CD4-positive, alpha-beta T cell (primary cell): ENCODE measurements at regions of chr1 and their contacts with region 1.

Region 1: GRCh38 chr1:198681831-198682759 is 43.3 kb downstream of the PTPRC start:
- DNase-seq: peak; percentile 57 to 97 (median 76)
- ATAC-seq: peak; percentile 72
- H3K4me3 ChIP-seq: peak overlapping the region; percentile 21
- H3K4me3 Mint-ChIP-seq: peak overlapping the region; percentile 78
- H3K27ac ChIP-seq: peak overlapping the region; percentile 89 to 91
- H3K27ac Mint-ChIP-seq: peak overlapping the region; percentile 100
- H3K4me1 ChIP-seq: peaks cover 32% of the 10 kb centered on the region
- H3K4me1 Mint-ChIP-seq: peaks cover 86% of the 10 kb centered on the region
- H3K27me3 ChIP-seq: no peaks in the 10 kb centered on the region
- H3K27me3 Mint-ChIP-seq: no peaks in the 10 kb centered on the region
- CTCF ChIP-seq: no peak

Region 2: GRCh38 chr1:197285526-197286205 is 1396.4 kb before region 1 on chr1:
- CTCF ChIA-PET with region 1: no interaction called
- POLR2A ChIA-PET with region 1: no interaction called
- intact Hi-C with region 1: no loop called
- DNase-seq: no peak
- ATAC-seq: no peak
- H3K4me3 ChIP-seq: no peak overlapping the region
- H3K4me3 Mint-ChIP-seq: no peak overlapping the region
- H3K27ac ChIP-seq: no peak overlapping the region
- H3K27ac Mint-ChIP-seq: no peak overlapping the region
- H3K4me1 ChIP-seq: no peaks in the 10 kb centered on the region
- H3K4me1 Mint-ChIP-seq: no peaks in the 10 kb centered on the region
- H3K27me3 ChIP-seq: peaks cover 0 to 2% of the 10 kb centered on the region in 2 experiments
- H3K27me3 Mint-ChIP-seq: peaks cover 4% of the 10 kb centered on the region
- CTCF ChIP-seq: no peak

Region 3: DNA sequence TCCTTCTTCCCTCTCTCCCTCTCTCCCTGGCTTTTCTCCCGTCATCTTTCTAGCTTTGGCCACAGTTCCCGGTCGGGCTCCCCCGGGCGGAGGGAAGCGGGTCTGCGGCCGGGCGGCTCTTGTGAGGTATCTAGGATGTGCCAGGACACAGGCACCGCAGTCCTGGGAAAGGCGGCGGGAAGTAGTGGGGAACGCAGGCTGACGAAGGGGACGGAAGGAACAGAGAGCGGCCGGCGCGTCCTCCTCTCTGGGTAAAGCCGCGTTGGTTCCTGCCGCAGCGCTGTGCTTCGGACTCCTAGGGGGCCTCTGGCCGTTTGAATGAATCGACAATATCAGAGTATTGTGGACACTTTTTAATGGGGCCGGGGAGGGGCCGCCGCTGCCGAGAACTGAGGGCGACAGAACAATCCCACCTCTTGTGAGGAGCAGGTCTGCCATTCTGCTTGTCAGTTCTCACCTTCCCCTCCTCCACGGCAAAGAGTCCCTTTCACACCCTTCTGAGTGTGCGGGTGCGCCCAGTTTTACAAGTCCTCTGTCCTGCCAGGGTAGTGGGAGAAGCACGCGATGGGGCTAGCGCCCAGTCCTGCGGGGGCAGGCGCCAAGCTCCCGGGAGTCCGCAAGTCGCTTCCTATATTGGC is 766.1 kb before region 1 on chr1:
- CTCF ChIA-PET with region 1: no interaction called
- POLR2A ChIA-PET with region 1: interaction called, 3 read pairs
- intact Hi-C with region 1: loop called in 1 of 2 experiments (anchors 10 kb)
- DNase-seq: peak in 3 of 14 experiments; percentile 11 to 33 (median 30)
- ATAC-seq: no peak
- H3K4me3 ChIP-seq: no peak overlapping the region
- H3K4me3 Mint-ChIP-seq: peak overlapping the region; percentile 35
- H3K27ac ChIP-seq: no peak overlapping the region
- H3K27ac Mint-ChIP-seq: no peak overlapping the region
- H3K4me1 ChIP-seq: peaks cover 85% of the 10 kb centered on the region
- H3K4me1 Mint-ChIP-seq: peaks cover 94% of the 10 kb centered on the region
- H3K27me3 ChIP-seq: peaks cover 99 to 100% of the 10 kb centered on the region in 2 experiments
- H3K27me3 Mint-ChIP-seq: peaks cover 100% of the 10 kb centered on the region
- CTCF ChIP-seq: no peak

Region 4: GRCh38 chr1:198465201-198466144 is 216.6 kb before region 1 on chr1:
- CTCF ChIA-PET with region 1: no interaction called
- POLR2A ChIA-PET with region 1: no interaction called
- intact Hi-C with region 1: loop called in 1 of 2 experiments (anchors 5 kb)
- DNase-seq: peak in 3 of 14 experiments; percentile 54 to 64 (median 57)
- ATAC-seq: peak; percentile 60
- H3K4me3 ChIP-seq: no peak overlapping the region
- H3K4me3 Mint-ChIP-seq: no peak overlapping the region
- H3K27ac ChIP-seq: no peak overlapping the region
- H3K27ac Mint-ChIP-seq: no peak overlapping the region
- H3K4me1 ChIP-seq: no peaks in the 10 kb centered on the region
- H3K4me1 Mint-ChIP-seq: no peaks in the 10 kb centered on the region
- H3K27me3 ChIP-seq: no peaks in the 10 kb centered on the region
- H3K27me3 Mint-ChIP-seq: no peaks in the 10 kb centered on the region
- CTCF ChIP-seq: peak; percentile 73

Region 5: GRCh38 chr1:198612471-198613260 is 69.4 kb before region 1 on chr1:
- CTCF ChIA-PET with region 1: interaction called, 6 read pairs
- POLR2A ChIA-PET with region 1: interaction called, 14 read pairs
- intact Hi-C with region 1: no loop called
- DNase-seq: peak in 3 of 14 experiments; percentile 57 to 78 (median 60)
- ATAC-seq: peak; percentile 45
- H3K4me3 ChIP-seq: peak overlapping the region; percentile 28
- H3K4me3 Mint-ChIP-seq: peak overlapping the region; percentile 79
- H3K27ac ChIP-seq: peak overlapping the region; percentile 71
- H3K27ac Mint-ChIP-seq: peak overlapping the region; percentile 98
- H3K4me1 ChIP-seq: peaks cover 50% of the 10 kb centered on the region
- H3K4me1 Mint-ChIP-seq: peaks cover 70% of the 10 kb centered on the region
- H3K27me3 ChIP-seq: no peaks in the 10 kb centered on the region
- H3K27me3 Mint-ChIP-seq: no peaks in the 10 kb centered on the region
- CTCF ChIP-seq: no peak

Region 6: GRCh38 chr1:198638894-198639635 is 43.0 kb before region 1 on chr1 and contains the start of gene PTPRC:
- CTCF ChIA-PET with region 1: interaction called, 4 read pairs
- POLR2A ChIA-PET with region 1: interaction called, 152 read pairs
- intact Hi-C with region 1: loop called (anchors 1 to 5 kb)
- DNase-seq: peak in 4 of 14 experiments; percentile 35 to 88 (median 76)
- ATAC-seq: peak; percentile 83
- H3K4me3 ChIP-seq: peak within 1 kb of the TSS; percentile 79
- H3K4me3 Mint-ChIP-seq: peak within 1 kb of the TSS; percentile 95
- H3K27ac ChIP-seq: peak within 1 kb of the TSS; percentile 67 to 77
- H3K27ac Mint-ChIP-seq: peak within 1 kb of the TSS; percentile 98
- H3K4me1 ChIP-seq: peaks cover 20% of the 10 kb centered on the region
- H3K4me1 Mint-ChIP-seq: peaks cover 62% of the 10 kb centered on the region
- H3K27me3 ChIP-seq: no peaks in the 10 kb centered on the region
- H3K27me3 Mint-ChIP-seq: no peaks in the 10 kb centered on the region
- CTCF ChIP-seq: no peak
- total RNA-seq, gene PTPRC: 661 to 698 TPM

Region 7: GRCh38 chr1:198669023-198669698 is 12.9 kb before region 1 on chr1:
- CTCF ChIA-PET with region 1: interaction called, 6 read pairs
- POLR2A ChIA-PET with region 1: interaction called, 145 read pairs
- intact Hi-C with region 1: loop called in 1 of 2 experiments (anchors 1 kb)
- DNase-seq: peak in 6 of 14 experiments; percentile 29 to 83 (median 66)
- ATAC-seq: peak; percentile 72
- H3K4me3 ChIP-seq: no peak overlapping the region
- H3K4me3 Mint-ChIP-seq: peak overlapping the region; percentile 72
- H3K27ac ChIP-seq: peak overlapping the region; percentile 61 to 66
- H3K27ac Mint-ChIP-seq: peak overlapping the region; percentile 100
- H3K4me1 ChIP-seq: peaks cover 52% of the 10 kb centered on the region
- H3K4me1 Mint-ChIP-seq: peaks cover 98% of the 10 kb centered on the region
- H3K27me3 ChIP-seq: no peaks in the 10 kb centered on the region
- H3K27me3 Mint-ChIP-seq: no peaks in the 10 kb centered on the region
- CTCF ChIP-seq: no peak